ENCODE measurements at regions of chr6 and their contacts with region 1.

Region 1: DNA sequence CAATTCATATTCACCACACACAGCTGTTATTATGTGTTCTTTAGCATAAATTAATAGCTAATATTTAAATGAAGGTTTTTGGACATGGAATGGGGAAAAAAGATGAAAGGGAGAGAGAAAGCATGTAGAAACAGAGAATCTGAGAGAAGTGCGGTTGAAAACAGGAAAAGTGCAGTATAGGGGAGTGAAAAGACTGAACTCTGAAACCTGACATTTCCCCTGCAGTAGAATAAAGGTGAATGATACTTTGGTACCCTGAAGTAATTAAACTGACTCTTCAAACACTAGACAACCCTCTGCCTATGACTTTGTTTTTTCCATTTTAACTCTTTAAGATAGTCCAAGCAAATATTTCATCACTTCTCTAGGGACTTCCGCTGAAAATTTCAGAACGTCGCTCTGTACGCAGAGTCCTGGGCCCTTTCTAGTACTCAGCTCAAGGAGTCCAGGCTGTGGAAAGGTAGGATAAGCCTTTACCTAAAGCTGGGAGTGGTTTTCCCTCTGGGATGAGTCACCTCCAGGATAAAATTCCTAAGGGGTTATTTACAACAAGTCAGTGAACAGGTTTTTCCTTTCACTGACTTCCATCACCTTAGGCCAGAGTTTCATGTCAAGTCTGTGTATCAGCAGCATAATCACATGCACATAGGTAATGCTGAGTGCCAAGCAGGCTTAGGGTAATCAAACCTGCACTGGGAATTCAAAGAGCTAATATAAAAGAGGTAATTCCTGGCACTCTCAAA is 614.5 kb downstream of the PKHD1 start:
- DNase-seq: no peak
- ATAC-seq: peak; percentile 70
- H3K4me3 ChIP-seq: no peak overlapping the region
- H3K27ac ChIP-seq: no peak overlapping the region
- H3K4me1 ChIP-seq: peaks cover 5% of the 10 kb centered on the region; the same call in 1 of the 2 replicates
- H3K27me3 ChIP-seq: no peaks in the 10 kb centered on the region
- CTCF ChIP-seq: no peak
- EP300 ChIP-seq: no peak; a peak in 1 of 4 replicates
- POLR2A ChIP-seq: no peak
- RAD21 ChIP-seq: no peak

Region 2: DNA sequence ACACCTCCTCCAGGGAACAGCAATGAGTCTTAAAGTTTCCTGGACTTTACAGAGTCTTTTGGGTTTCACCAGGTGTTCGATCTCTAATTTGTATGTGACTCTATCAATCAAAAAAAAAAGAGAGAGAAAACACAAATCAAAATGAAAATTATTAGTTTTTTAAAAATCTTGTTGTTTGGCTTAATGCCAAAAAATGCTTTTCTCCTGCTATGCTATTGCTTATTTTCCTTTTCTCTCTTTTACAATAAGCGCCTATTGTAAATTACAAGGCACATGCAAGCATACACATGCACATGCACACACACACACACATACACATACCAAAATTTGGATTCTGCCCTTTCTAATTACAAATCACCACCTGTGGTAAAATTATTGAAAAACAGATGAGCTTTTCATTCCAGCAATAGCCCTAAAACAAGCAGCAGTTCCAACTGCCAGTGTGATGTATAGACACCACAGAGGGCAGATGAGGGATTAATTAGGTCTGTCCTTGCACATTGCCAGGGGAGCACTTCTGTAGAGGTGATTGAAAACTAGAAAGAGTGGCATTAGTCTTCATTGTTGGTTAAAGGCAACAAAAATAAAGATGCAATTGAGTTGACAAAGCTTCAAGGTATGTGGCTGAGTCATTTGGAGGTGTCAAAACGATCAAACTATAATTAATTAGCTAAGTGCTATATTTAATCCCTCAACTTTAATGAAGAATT is 22.5 kb before region 1 on chr6:
- CTCF ChIA-PET with region 1: interaction called, 3 read pairs
- POLR2A ChIA-PET with region 1: no interaction called
- RAD21 ChIA-PET with region 1: no interaction called
- SMC1A ChIA-PET with region 1: interaction called, 10 read pairs
- in situ Hi-C with region 1: no loop called
- intact Hi-C with region 1: no loop called
- DNase-seq: peak; percentile 15
- ATAC-seq: peak; percentile 91
- H3K4me3 ChIP-seq: no peak overlapping the region
- H3K27ac ChIP-seq: no peak overlapping the region
- H3K4me1 ChIP-seq: no peaks in the 10 kb centered on the region
- H3K27me3 ChIP-seq: no peaks in the 10 kb centered on the region
- CTCF ChIP-seq: no peak
- EP300 ChIP-seq: 0 out of 4 replicates have a peak, but pooled peaks of 1 of the 2 experiments have one; percentile 22
- POLR2A ChIP-seq: no peak
- RAD21 ChIP-seq: no peak

Measured in GM12878 (cell line).